ENCODE measurements at regions of chr6 and their contacts with region 1.

Region 1: GRCh38 chr6:113361014-113361645 is 496.0 kb upstream of the MARCKS start:
- DNase-seq: peak in 1 of 2 experiments; percentile 59
- H3K4me3 ChIP-seq: no peak overlapping the region
- H3K27ac ChIP-seq: 0 out of 2 replicates have a peak overlapping the region, but pooled peaks have one; percentile 2
- H3K4me1 ChIP-seq: peaks cover 37% of the 10 kb centered on the region
- H3K27me3 ChIP-seq: no peaks in the 10 kb centered on the region
- CTCF ChIP-seq: no peak

Region 2: GRCh38 chr6:112113431-112113830 is 1247.7 kb before region 1 on chr6:
- CTCF ChIA-PET with region 1: no interaction called
- POLR2A ChIA-PET with region 1: interaction called, 18 read pairs
- intact Hi-C with region 1: no loop called
- DNase-seq: no peak
- H3K4me3 ChIP-seq: no peak overlapping the region
- H3K27ac ChIP-seq: no peak overlapping the region
- H3K4me1 ChIP-seq: peaks cover 9% of the 10 kb centered on the region
- H3K27me3 ChIP-seq: no peaks in the 10 kb centered on the region
- CTCF ChIP-seq: no peak

Region 3: DNA sequence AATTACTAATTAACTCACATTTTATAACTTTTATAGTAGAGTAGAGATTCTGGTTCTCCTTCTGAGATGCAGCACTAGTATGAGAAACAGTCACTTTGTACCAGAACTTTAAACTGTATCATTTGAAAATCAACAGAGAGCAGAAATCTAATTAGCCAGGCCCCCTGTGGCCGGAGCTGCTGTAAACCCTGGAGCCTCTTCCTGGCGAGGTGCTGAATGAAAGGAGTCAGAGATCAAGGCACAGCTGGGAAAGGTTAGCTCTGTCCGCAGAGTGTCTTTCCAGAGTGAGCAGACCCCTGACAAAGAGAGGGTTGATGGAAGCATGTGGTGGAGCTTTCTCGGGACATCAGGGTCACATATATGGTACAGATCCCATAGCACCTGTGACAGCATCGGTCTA is 310.2 kb before region 1 on chr6:
- CTCF ChIA-PET with region 1: no interaction called
- POLR2A ChIA-PET with region 1: interaction called, 15 read pairs
- intact Hi-C with region 1: no loop called
- DNase-seq: no peak
- H3K4me3 ChIP-seq: no peak overlapping the region
- H3K27ac ChIP-seq: no peak overlapping the region
- H3K4me1 ChIP-seq: peaks cover 6% of the 10 kb centered on the region; the same call in 1 of the 2 replicates
- H3K27me3 ChIP-seq: no peaks in the 10 kb centered on the region
- CTCF ChIP-seq: no peak

Region 4: GRCh38 chr6:113160306-113161017 is 200.7 kb before region 1 on chr6:
- CTCF ChIA-PET with region 1: no interaction called
- POLR2A ChIA-PET with region 1: no interaction called
- intact Hi-C with region 1: no loop called
- DNase-seq: no peak
- H3K4me3 ChIP-seq: no peak overlapping the region
- H3K27ac ChIP-seq: no peak overlapping the region
- H3K4me1 ChIP-seq: no peaks in the 10 kb centered on the region
- H3K27me3 ChIP-seq: no peaks in the 10 kb centered on the region
- CTCF ChIP-seq: no peak

Region 5: DNA sequence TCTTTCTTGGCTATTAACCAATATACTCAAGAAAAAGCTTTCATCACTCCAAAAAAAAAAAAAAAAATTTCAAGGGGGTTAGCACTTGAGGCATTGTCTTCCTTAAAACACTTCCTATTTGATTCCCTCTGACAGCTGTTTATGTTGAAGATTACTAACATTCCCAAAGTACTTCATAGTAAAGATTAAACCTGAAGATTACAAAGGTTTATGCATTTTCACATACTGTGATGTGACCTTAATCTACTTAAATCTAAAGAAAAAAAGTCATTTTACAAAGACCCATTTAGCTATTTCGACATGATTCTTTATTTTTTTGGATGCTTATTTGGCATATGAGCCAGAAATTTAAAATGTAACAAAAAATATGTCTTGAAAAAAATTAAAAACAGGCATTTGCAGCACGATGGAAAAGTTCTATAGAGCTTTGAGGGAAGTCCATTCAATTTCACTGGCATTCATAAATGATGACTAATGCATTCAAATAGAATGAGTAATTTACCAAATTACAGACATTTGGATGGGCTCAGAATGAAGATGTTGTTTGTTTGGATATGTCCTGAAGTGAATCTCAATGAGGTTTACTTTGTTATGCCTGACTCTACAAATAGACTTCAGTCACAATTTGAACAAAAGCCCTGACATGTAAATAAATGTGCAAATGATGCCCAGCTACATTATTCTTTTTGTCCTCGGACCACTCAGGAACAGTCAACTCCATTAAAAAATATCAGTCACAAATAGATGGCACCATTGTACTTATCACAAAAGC is 178.6 kb before region 1 on chr6:
- CTCF ChIA-PET with region 1: no interaction called
- POLR2A ChIA-PET with region 1: interaction called, 22 read pairs
- intact Hi-C with region 1: no loop called
- DNase-seq: peak in 1 of 2 experiments; percentile 79
- H3K4me3 ChIP-seq: no peak overlapping the region
- H3K27ac ChIP-seq: peak overlapping the region; percentile 30
- H3K4me1 ChIP-seq: peaks cover 18% of the 10 kb centered on the region
- H3K27me3 ChIP-seq: no peaks in the 10 kb centered on the region
- CTCF ChIP-seq: no peak

Region 6: DNA sequence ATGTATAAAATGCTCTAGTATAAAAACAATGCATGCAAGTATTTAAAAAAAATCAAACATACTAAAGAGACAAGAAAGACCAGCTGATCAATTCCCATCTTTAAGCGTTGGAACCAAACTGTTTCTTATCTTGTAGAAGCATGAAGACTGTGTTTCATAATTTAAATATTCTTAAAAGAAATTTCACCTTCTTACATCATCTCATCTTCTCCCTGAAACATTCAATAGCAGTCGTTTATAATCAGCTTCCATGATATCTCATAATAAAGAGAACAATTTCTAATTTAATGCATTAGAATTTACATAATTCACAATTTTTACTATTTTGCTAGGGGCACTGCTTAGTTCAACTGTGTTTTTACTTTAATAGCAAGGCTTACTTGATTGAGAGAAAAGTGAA is 27.9 kb after region 1 on chr6:
- CTCF ChIA-PET with region 1: no interaction called
- POLR2A ChIA-PET with region 1: interaction called, 12 read pairs
- intact Hi-C with region 1: no loop called
- DNase-seq: no peak
- H3K4me3 ChIP-seq: no peak overlapping the region
- H3K27ac ChIP-seq: no peak overlapping the region
- H3K4me1 ChIP-seq: 0 out of 2 replicates have a peak, but pooled peaks cover 7% of the 10 kb centered on the region
- H3K27me3 ChIP-seq: no peaks in the 10 kb centered on the region
- CTCF ChIP-seq: no peak

Region 7: DNA sequence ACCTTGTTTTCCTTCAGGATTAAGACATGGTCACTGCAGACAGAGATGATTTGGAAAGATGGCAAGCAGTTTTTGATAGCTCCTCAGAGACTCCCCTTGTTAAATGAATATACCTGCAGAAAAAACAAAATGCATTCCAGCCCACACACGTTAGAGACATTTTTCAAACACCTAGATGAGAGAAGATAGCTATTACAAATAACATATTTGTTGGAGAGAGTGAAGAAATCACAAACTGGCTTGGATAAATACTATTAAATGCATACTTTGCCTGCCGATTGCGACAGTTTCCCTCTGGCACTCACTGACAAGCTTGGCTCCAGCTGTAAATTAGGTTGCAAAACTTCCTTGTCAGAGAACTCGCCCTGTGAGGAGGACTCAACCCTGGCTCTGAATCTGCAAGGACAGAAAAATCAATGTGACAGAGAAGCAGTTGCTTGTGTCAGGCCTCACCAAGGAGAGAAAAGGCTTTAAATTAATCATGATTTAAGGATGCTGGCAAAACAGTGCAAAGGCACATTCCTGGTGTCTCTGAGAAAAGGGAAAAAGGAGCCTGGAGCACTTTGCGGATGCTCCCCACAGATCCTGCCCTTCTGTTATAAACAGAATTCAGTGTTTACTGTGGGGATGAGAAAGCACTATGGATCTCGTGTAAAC is 72.3 kb after region 1 on chr6:
- CTCF ChIA-PET with region 1: no interaction called
- POLR2A ChIA-PET with region 1: no interaction called
- intact Hi-C with region 1: loop called (anchors 2 kb)
- DNase-seq: peak; percentile 61 to 99
- H3K4me3 ChIP-seq: peak overlapping the region; percentile 16; the same call in 1 of the 2 replicates
- H3K27ac ChIP-seq: peak overlapping the region; percentile 87
- H3K4me1 ChIP-seq: peaks cover 48% of the 10 kb centered on the region
- H3K27me3 ChIP-seq: no peaks in the 10 kb centered on the region
- CTCF ChIP-seq: no peak

Region 8: GRCh38 chr6:113654396-113654795 is 293.3 kb after region 1 on chr6:
- CTCF ChIA-PET with region 1: no interaction called
- POLR2A ChIA-PET with region 1: interaction called, 28 read pairs
- intact Hi-C with region 1: no loop called
- DNase-seq: peak; percentile 81 to 95
- H3K4me3 ChIP-seq: 0 out of 2 replicates have a peak overlapping the region, but pooled peaks have one; percentile 20
- H3K27ac ChIP-seq: peak overlapping the region; percentile 75
- H3K4me1 ChIP-seq: peaks cover 27% of the 10 kb centered on the region
- H3K27me3 ChIP-seq: no peaks in the 10 kb centered on the region
- CTCF ChIP-seq: no peak

Region 9: GRCh38 chr6:114650891-114651290 is 1289.8 kb after region 1 on chr6:
- CTCF ChIA-PET with region 1: no interaction called
- POLR2A ChIA-PET with region 1: no interaction called
- intact Hi-C with region 1: no loop called
- DNase-seq: peak in 1 of 2 experiments; percentile 49
- H3K4me3 ChIP-seq: no peak overlapping the region
- H3K27ac ChIP-seq: no peak overlapping the region
- H3K4me1 ChIP-seq: 0 out of 2 replicates have a peak, but pooled peaks cover 11% of the 10 kb centered on the region
- H3K27me3 ChIP-seq: no peaks in the 10 kb centered on the region
- CTCF ChIP-seq: no peak

Measured in PC-9 (cell line).